ENCODE measurements at regions of chrX and their contacts with region 1.

Region 1: GRCh38 chrX:23901805-23902204 is 5.9 kb downstream of the APOO start:
- DNase-seq: peak; percentile 44
- H3K4me3 Mint-ChIP-seq: no peak overlapping the region
- H3K27ac Mint-ChIP-seq: no peak overlapping the region
- H3K4me1 Mint-ChIP-seq: peaks cover 28% of the 10 kb centered on the region
- H3K27me3 Mint-ChIP-seq: no peaks in the 10 kb centered on the region
- CTCF ChIP-seq: peak; percentile 5

Region 2: GRCh38 chrX:23694606-23695005 is 207.2 kb before region 1 on chrX:
- CTCF ChIA-PET with region 1: interaction called, 8 read pairs
- intact Hi-C with region 1: loop called (anchors 1 kb)
- DNase-seq: peak; percentile 24
- H3K4me3 Mint-ChIP-seq: no peak overlapping the region
- H3K27ac Mint-ChIP-seq: no peak overlapping the region
- H3K4me1 Mint-ChIP-seq: no peaks in the 10 kb centered on the region
- H3K27me3 Mint-ChIP-seq: no peaks in the 10 kb centered on the region
- CTCF ChIP-seq: peak; percentile 46

Region 3: DNA sequence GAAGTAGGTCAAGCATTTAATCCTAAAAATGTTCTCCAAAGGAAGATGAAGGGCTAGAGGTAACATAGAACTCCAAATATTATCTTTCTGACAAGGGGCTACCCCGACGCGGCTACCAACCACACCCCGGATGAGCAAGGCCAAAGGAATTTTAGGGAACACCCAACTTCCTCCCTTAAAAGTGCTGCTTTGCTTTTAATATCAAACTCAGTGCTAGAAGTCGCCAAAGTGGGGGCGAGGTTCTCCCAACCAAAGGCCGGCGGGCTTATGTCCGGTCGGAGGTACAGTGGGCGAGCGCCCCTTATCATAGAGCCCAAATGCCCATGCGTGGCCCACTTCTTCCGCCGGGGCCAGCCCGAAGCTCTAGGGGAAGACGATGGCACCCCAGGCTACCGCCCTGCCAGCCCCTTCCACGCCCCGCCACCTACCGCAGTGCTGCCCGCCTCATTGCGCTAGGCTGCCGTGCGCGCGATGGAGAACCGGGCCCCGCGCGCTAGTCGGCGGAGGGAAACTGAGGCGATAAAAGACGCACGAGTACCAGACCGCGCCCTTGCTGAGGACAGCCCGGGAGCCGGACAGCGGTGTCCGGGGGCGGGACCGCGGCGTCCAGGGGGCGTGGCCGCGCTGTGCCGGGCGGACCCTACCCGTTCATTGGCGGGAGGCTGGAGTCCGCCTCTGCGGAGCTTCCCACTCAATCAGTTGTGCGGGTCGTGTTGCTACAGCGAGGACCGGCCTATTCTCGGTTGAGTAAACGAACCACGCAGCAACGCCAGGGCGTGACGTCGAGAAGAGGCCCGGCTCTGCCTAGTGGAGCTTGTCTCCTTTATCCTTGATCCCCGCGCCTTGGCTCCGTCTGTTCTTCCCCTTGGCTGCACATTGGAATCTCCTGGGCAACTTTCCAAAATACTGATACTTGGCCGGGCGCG is 158.8 kb before region 1 on chrX and contains the start of gene ACOT9:
- CTCF ChIA-PET with region 1: interaction called, 10 read pairs
- intact Hi-C with region 1: no loop called
- DNase-seq: peak; percentile 91
- H3K4me3 Mint-ChIP-seq: peak within 1 kb of the TSS; percentile 67
- H3K27ac Mint-ChIP-seq: peak within 1 kb of the TSS; percentile 61
- H3K4me1 Mint-ChIP-seq: peaks cover 18% of the 10 kb centered on the region
- H3K27me3 Mint-ChIP-seq: no peaks in the 10 kb centered on the region
- CTCF ChIP-seq: no peak
- total RNA-seq, gene ACOT9: 38.1 and 49.6 TPM in 2 replicates

Region 4: DNA sequence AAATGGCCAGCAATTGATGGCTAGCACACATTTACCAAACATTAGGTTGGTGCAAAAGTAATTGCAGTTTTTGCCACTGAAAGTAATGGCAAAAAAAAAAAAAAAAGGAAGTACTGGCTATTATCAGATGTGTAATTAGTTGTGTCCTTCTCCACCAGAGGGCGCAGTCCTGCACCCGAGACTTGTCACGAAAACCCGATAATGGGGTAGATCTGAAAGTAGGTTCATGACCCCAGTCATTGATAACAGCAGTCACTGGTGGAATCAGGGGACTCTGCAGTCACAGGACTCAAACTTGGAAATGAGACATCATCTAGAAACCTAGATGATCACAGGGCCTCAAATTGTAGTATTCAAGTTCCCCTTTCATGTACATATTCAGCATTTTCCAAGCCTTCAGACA is 145.6 kb before region 1 on chrX:
- CTCF ChIA-PET with region 1: no interaction called
- intact Hi-C with region 1: loop called (anchors 1 kb)
- DNase-seq: peak; percentile 66
- H3K4me3 Mint-ChIP-seq: no peak overlapping the region
- H3K27ac Mint-ChIP-seq: no peak overlapping the region
- H3K4me1 Mint-ChIP-seq: no peaks in the 10 kb centered on the region
- H3K27me3 Mint-ChIP-seq: no peaks in the 10 kb centered on the region
- CTCF ChIP-seq: peak; percentile 41

Region 5: DNA sequence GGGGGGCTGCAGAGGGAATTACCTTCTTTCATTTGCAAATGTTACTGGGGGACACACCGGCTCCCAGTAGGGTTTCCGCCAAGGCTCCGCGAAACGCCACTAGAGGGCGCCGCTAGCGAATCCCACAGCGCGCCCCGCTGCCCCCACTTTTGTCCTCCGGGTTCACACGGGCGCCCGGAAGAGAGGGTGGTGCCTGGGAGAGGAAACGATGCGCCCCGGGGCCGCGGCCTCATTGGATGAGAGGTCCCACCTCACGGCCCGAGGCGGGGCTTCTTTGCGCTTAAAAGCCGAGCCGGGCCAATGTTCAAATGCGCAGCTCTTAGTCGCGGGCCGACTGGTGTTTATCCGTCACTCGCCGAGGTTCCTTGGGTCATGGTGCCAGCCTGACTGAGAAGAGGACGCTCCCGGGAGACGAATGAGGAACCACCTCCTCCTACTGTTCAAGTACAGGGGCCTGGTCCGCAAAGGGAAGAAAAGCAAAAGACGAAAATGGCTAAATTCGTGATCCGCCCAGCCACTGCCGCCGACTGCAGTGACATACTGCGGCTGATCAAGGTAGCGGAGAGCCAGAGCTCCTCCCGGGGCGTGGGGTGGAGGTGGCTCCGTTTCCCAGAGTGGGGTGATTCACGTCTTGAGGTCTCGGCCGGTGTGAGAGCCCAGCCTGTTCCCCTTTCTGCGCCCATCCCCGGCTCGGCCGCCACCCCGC is 118.8 kb before region 1 on chrX and contains the start of gene SAT1:
- CTCF ChIA-PET with region 1: interaction called, 45 read pairs
- intact Hi-C with region 1: loop called (anchors 1 kb)
- DNase-seq: peak; percentile 96
- H3K4me3 Mint-ChIP-seq: peak within 1 kb of the TSS; percentile 81
- H3K27ac Mint-ChIP-seq: peak within 1 kb of the TSS; percentile 93
- H3K4me1 Mint-ChIP-seq: peaks cover 17% of the 10 kb centered on the region
- H3K27me3 Mint-ChIP-seq: no peaks in the 10 kb centered on the region
- CTCF ChIP-seq: peak; percentile 84
- total RNA-seq, gene SAT1: 419 and 426 TPM in 2 replicates

Region 6: GRCh38 chrX:23803931-23804381 is 97.8 kb before region 1 on chrX:
- CTCF ChIA-PET with region 1: interaction called, 11 read pairs
- intact Hi-C with region 1: no loop called
- DNase-seq: peak; percentile 64
- H3K4me3 Mint-ChIP-seq: peak overlapping the region; percentile 57
- H3K27ac Mint-ChIP-seq: peak overlapping the region; percentile 99
- H3K4me1 Mint-ChIP-seq: peaks cover 41% of the 10 kb centered on the region
- H3K27me3 Mint-ChIP-seq: no peaks in the 10 kb centered on the region
- CTCF ChIP-seq: no peak

Region 7: DNA sequence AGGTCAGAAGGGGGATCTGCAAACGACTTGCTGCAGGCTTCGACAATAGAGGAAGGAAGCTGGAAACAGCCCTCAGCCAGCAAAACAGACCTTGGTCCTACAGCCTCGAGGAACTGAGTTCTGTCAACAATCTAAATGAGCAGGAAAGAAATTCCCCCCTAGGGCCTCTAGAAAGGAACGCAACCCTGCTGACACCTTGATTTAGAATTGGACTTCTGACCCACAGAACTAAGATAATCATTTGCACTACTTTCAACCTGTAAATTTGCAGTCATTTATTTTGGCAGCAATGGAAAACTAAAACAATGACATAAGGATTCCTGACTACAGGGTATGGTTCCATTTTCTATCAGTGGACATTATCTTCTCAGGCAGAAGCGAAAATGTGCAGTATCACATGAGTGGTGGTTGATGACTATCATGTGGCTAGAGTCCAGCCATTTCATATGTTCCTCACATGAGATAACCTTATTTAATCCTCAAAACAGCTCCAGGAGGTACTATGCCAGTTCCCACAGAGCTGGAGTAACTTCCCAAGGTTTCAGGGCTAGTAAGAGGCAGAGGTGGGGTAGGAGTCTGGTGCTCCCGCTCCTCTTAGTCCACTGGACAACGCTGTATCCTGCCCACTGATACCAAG is 57.2 kb before region 1 on chrX:
- CTCF ChIA-PET with region 1: no interaction called
- intact Hi-C with region 1: loop called (anchors 2 kb)
- DNase-seq: no peak
- H3K4me3 Mint-ChIP-seq: no peak overlapping the region
- H3K27ac Mint-ChIP-seq: peak overlapping the region; percentile 5
- H3K4me1 Mint-ChIP-seq: peaks cover 16% of the 10 kb centered on the region
- H3K27me3 Mint-ChIP-seq: no peaks in the 10 kb centered on the region
- CTCF ChIP-seq: no peak

Region 8: DNA sequence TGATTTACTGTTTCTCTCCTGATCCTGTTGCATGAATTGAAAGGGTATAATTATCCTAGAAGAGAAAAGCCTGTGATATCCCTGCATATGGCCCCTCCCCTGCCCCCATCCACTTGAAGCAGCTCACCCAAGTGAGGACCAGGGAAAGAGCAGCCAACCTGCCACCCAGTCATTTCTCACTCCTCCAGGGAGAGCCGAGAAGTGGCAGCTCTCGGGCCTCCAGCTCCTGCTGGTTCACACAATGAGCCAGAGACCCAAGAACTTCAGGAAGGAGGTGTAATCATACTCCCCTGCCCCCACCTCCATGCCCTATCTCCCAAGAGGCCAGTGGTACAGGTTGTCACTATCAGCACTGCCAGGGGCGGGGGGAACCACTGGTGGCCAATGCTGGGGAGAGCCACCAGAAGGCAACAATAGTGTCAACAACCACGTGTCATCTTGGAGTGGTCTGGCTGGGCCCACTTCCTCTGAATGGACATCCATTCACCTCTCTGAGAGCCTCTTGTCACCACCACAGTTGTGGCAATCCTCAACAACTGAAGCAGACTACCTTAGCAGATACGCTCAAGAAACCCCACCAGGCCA is 37.0 kb before region 1 on chrX:
- CTCF ChIA-PET with region 1: no interaction called
- intact Hi-C with region 1: no loop called
- DNase-seq: no peak
- H3K4me3 Mint-ChIP-seq: no peak overlapping the region
- H3K27ac Mint-ChIP-seq: no peak overlapping the region
- H3K4me1 Mint-ChIP-seq: no peaks in the 10 kb centered on the region
- H3K27me3 Mint-ChIP-seq: no peaks in the 10 kb centered on the region
- CTCF ChIP-seq: no peak

Measured in Calu3 (cell line).